Activated B cell treated with CpG ODN at 0.5 μM for 24 hours (primary cell): ENCODE measurements at regions of chr15 and their contacts with region 1.

Region 1: GRCh38 chr15:72189250-72189902 is 8.2 kb downstream of the GRAMD2A start:
- DNase-seq: no peak
- ATAC-seq: no peak
- H3K4me3 Mint-ChIP-seq: no peak overlapping the region
- H3K27ac Mint-ChIP-seq: no peak overlapping the region
- H3K4me1 Mint-ChIP-seq: no peaks in the 10 kb centered on the region
- H3K27me3 Mint-ChIP-seq: peaks cover 21% of the 10 kb centered on the region
- CTCF ChIP-seq: no peak

Region 2: DNA sequence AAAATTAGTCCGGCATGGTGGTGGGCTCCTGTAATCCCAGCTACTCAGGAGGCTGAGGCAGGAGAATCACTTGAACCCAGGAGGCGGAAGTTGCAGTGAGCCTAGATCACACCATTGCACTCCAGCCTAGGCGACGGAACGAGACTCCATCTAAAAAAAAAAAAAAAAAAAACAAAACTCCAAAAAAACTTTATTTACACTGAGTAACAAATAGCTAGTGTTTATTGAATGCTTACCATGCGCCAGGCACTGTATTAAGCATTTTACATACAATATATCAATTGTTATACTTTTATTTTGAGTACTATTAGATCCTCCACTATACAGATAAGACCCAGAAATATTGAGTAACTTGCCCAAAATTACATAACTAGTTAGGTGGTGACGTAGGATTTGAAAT is 267.3 kb after region 1 on chr15:
- CTCF ChIA-PET with region 1: no interaction called
- POLR2A ChIA-PET with region 1: interaction called, 13 read pairs
- intact Hi-C with region 1: no loop called
- DNase-seq: no peak
- ATAC-seq: no peak
- H3K4me3 Mint-ChIP-seq: no peak overlapping the region
- H3K27ac Mint-ChIP-seq: no peak overlapping the region
- H3K4me1 Mint-ChIP-seq: peaks cover 4% of the 10 kb centered on the region
- H3K27me3 Mint-ChIP-seq: no peaks in the 10 kb centered on the region
- CTCF ChIP-seq: no peak